Transverse colon (tissue), 4 donors: ENCODE measurements at regions of chr11 and their contacts with region 1.

Region 1: DNA sequence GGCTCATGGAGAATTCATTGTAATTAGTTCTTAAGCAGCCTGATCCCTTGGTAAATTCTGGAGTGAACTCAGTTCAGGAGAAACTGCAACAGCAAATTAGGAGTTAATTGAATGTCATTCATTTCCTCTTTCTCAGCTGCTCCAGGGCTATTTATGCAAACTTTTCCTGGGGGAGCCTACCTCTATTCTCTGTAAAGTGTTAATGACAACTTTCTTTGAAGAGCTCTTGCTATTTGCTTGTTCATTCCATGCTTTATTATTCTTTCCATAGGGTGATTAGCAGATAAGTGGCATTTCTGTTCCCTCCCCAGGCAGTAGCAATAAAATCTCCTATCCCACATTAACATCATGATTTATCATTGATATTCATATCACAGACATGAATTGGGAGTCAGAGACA is 267.6 kb upstream of the DDI1 start:
- DNase-seq: no peak
- H3K4me3 ChIP-seq: no peak overlapping the region
- H3K27ac ChIP-seq: no peak overlapping the region
- H3K4me1 ChIP-seq: no peaks in the 10 kb centered on the region
- H3K27me3 ChIP-seq: no peaks in the 10 kb centered on the region
- CTCF ChIP-seq: no peak
- EP300 ChIP-seq: no peak
- POLR2A ChIP-seq: no peak

Region 2: DNA sequence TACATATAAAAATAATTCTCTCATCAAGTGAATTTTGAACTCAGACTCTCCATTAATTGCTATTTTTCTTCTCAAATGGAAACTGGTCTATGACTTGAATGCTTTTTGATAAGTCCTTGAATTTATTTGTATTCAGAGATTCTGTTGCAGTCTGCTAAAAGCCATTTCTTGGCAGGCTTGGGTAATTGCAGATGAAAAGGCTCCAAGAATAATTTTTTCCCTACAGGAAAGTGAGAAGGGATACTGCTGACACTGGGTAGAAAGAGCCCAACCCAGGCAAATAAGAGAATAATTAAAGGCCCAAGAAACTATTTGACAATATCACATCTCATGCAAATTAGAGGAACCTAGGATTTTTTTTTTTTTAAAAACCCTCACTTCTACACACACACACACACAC is 21.1 kb after region 1 on chr11:
- in situ Hi-C with region 1: no loop called
- intact Hi-C with region 1: no loop called
- DNase-seq: no peak
- H3K4me3 ChIP-seq: no peak overlapping the region
- H3K27ac ChIP-seq: no peak overlapping the region
- H3K4me1 ChIP-seq: no peaks in the 10 kb centered on the region
- H3K27me3 ChIP-seq: no peaks in the 10 kb centered on the region
- CTCF ChIP-seq: no peak
- EP300 ChIP-seq: no peak
- POLR2A ChIP-seq: no peak

Region 3: DNA sequence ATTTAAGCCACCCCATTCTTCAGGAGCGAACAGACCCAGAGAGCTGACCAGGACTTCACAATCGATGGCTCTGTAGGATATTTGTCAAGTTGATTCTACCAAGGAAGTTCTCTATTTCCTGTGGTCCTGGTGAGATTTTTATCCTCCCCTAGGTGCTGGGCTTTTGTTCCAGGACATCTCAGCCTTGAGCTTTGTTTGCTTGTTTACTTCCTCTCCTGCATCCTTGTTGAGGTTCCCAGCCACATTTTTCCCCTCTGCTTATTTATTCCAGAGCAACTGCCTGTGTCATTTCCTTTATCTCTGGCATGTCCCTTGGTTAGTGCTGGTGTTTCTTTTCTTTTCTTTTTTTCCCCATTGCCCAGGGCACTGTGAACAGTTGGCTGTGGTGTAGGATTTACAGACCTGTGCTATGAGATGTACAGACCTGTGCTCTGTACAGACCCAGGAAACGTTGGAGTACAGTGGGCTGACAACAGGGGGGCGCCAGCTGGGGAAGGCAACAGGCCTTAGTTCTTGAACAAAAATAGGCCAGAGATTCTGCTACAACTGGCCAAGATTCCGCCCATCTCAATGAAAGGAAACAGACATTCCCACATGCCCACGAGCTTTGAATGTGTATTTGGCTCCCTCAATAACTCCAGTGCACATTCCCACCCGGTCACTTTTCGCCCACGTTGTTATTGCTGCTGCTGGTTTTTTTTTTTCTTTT is 31.7 kb after region 1 on chr11:
- in situ Hi-C with region 1: no loop called
- intact Hi-C with region 1: no loop called
- DNase-seq: no peak
- H3K4me3 ChIP-seq: no peak overlapping the region
- H3K27ac ChIP-seq: no peak overlapping the region
- H3K4me1 ChIP-seq: peaks cover 0 to 14% (median 3%) of the 10 kb centered on the region in 4 donors
- H3K27me3 ChIP-seq: no peaks in the 10 kb centered on the region
- CTCF ChIP-seq: no peak
- EP300 ChIP-seq: no peak
- POLR2A ChIP-seq: no peak

Region 4: GRCh38 chr11:103812680-103813079 is 43.9 kb after region 1 on chr11:
- in situ Hi-C with region 1: no loop called
- intact Hi-C with region 1: loop called (anchors 2 kb)
- DNase-seq: no peak
- H3K4me3 ChIP-seq: no peak overlapping the region
- H3K27ac ChIP-seq: no peak overlapping the region
- H3K4me1 ChIP-seq: no peaks in the 10 kb centered on the region
- H3K27me3 ChIP-seq: no peaks in the 10 kb centered on the region
- CTCF ChIP-seq: no peak
- EP300 ChIP-seq: no peak
- POLR2A ChIP-seq: no peak

Region 5: DNA sequence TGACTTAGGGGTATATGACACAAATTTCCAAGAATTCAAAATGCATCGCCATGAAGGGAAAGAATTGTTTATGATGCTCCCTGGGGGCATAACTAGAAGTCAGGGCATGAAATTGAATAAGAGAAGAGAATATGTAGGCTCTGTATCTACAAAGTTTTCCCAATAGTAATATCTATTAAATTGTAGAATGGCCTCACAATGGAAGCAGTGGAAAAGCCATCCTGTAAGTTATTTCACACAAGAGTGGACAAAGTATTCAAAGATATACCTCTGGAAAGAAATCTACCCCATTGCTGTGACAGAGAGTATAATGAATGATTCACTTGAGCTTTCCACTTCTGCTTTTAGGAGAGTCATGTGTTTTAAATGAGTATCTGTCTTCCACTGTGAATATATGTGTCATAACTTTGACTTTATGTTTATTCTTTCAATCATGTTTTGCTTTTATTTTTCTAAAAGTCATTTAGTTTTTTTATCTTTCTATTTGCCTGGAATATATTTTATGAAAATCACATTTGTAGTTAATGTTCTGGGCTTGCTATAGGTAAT is 202.0 kb after region 1 on chr11:
- in situ Hi-C with region 1: no loop called
- intact Hi-C with region 1: no loop called
- DNase-seq: no peak
- H3K4me3 ChIP-seq: no peak overlapping the region
- H3K27ac ChIP-seq: no peak overlapping the region
- H3K4me1 ChIP-seq: no peaks in the 10 kb centered on the region
- H3K27me3 ChIP-seq: no peaks in the 10 kb centered on the region
- CTCF ChIP-seq: no peak
- EP300 ChIP-seq: no peak
- POLR2A ChIP-seq: no peak